ENCODE measurements at regions of chr1 and their contacts with region 1.

Region 1: GRCh38 chr1:32316903-32317277 is 19.1 kb downstream of the MARCKSL1 start:
- DNase-seq: no peak
- H3K4me3 ChIP-seq: no peak overlapping the region
- H3K27ac ChIP-seq: no peak overlapping the region
- H3K4me1 ChIP-seq: peaks cover 2% of the 10 kb centered on the region
- H3K27me3 ChIP-seq: no peaks in the 10 kb centered on the region
- CTCF ChIP-seq: no peak

Region 2: DNA sequence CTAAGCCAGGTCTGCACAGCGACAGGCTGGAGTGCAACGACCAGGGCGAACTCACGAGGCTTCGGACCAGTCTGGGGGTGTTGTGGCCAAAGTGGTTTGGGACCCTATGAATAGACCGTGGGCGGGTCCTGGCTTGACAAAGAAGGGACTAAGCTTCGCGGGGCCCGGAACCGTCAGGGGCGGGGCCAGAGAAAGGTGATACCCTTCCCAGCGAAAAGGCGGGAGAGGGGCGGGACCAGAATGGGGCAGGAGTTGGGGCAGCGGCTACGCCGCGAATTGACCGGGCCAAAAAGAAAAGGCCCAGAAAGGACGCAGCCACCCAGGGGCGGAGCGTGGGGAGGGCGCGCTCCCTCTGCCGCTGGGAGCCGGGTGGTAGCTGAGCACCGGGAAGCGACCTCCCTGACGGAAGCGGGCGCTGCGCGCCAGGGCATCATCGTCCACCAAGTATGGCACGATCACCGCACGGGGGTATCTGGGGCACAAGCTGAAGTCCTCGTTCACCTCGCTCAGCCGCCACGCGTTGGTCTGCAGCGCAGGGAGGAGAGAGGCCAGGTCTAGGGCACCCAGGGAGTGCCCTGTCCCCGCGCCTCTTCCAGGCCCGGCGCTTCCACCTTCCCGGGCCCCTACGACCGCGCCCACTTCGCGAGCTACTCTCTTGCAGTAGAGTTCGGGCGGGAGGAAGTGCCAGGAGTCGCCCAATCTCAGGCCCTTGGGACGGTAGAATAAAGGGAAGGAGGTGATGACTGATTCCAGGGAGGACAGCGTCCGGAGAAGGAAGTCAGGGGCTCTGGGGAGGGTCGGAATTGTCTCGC is 76.5 kb before region 1 on chr1:
- CTCF ChIA-PET with region 1: interaction called, 10 read pairs
- POLR2A ChIA-PET with region 1: no interaction called
- intact Hi-C with region 1: no loop called
- DNase-seq: peak; percentile 63
- H3K4me3 ChIP-seq: peak overlapping the region; percentile 64
- H3K27ac ChIP-seq: peak overlapping the region; percentile 0
- H3K4me1 ChIP-seq: no peaks in the 10 kb centered on the region
- H3K27me3 ChIP-seq: no peaks in the 10 kb centered on the region
- CTCF ChIP-seq: peak; percentile 46

Region 3: GRCh38 chr1:33819913-33820311 is 1503.0 kb after region 1 on chr1:
- CTCF ChIA-PET with region 1: no interaction called
- POLR2A ChIA-PET with region 1: no interaction called
- intact Hi-C with region 1: no loop called
- DNase-seq: no peak
- H3K4me3 ChIP-seq: no peak overlapping the region
- H3K27ac ChIP-seq: no peak overlapping the region
- H3K4me1 ChIP-seq: no peaks in the 10 kb centered on the region
- H3K27me3 ChIP-seq: peaks cover 4% of the 10 kb centered on the region
- CTCF ChIP-seq: no peak

Measured in A673 (cell line).